ENCODE measurements at regions of chr10 and their contacts with region 1.

Region 1: GRCh38 chr10:132788180-132788830 is 2.4 kb upstream of the NKX6-2 start:
- DNase-seq: no peak
- H3K4me3 ChIP-seq: no peak overlapping the region
- H3K27ac ChIP-seq: no peak overlapping the region
- H3K4me1 ChIP-seq: no peaks in the 10 kb centered on the region
- H3K27me3 ChIP-seq: peaks cover 35 to 53% of the 10 kb centered on the region in 2 experiments
- CTCF ChIP-seq: peak in 1 of 2 donors; percentile 26
- POLR2A ChIP-seq: no peak

Region 2: GRCh38 chr10:130924138-130924819 is 1864.0 kb before region 1 on chr10:
- CTCF ChIA-PET with region 1: no interaction called
- POLR2A ChIA-PET with region 1: no interaction called
- dilution Hi-C with region 1: no loop called
- intact Hi-C with region 1: no loop called
- DNase-seq: no peak
- H3K4me3 ChIP-seq: no peak overlapping the region
- H3K27ac ChIP-seq: no peak overlapping the region
- H3K4me1 ChIP-seq: no peaks in the 10 kb centered on the region
- H3K27me3 ChIP-seq: no peaks in the 10 kb centered on the region
- CTCF ChIP-seq: no peak
- POLR2A ChIP-seq: no peak

Region 3: DNA sequence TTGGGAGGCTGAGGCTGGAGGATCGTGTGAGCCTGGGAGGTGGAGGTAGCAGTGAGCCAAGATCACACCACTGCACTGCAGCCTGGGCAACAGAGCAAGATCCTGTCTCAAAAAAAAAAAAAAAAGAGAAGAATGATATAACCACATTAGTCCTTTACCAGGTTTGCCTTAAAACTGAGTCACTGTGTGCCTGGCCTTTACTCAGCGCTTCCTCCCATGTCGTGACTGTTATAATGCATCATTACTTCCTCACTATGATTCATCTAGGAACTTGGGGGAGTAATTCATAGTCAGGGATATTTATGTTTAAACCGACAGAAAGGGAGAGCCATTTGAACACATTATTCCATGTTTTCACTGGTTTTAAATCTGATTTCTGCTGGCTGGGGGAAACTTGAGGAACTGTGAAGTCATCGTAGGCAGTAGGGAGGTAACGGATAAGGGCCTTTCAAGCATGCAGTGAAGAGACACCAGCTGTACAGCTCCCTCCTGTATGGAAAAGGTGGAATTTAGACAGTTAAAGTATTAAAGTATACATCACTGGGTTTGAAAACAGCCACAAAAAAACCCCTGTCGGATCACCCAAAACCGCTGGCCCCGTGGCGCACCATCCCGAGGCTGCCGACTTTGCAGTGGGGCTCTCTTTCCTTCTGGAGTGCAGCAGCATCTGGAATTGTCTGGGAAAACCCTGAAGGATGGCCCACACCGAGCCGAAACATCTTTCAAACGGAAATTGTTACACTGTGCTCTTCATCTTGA is 122.2 kb before region 1 on chr10:
- CTCF ChIA-PET with region 1: no interaction called
- POLR2A ChIA-PET with region 1: no interaction called
- dilution Hi-C with region 1: no loop called
- intact Hi-C with region 1: loop called (anchors 5 kb)
- DNase-seq: peak; percentile 96
- H3K4me3 ChIP-seq: peak overlapping the region in 2 of 3 experiments; percentile 34 to 44
- H3K27ac ChIP-seq: peak overlapping the region; percentile 87
- H3K4me1 ChIP-seq: peaks cover 30% of the 10 kb centered on the region
- H3K27me3 ChIP-seq: no peaks in the 10 kb centered on the region
- CTCF ChIP-seq: no peak
- POLR2A ChIP-seq: no peak